H1 (cell line): ENCODE measurements at regions of chr11 and their contacts with region 1.

Region 1: GRCh38 chr11:69088676-69089146 is 40.0 kb downstream of the TPCN2 start:
- DNase-seq: peak; percentile 70 to 89
- H3K4me3 ChIP-seq: no peak overlapping the region
- H3K27ac ChIP-seq: no peak overlapping the region
- H3K4me1 ChIP-seq: peaks cover 0 to 4% (median 0%) of the 10 kb centered on the region in 4 experiments; a peak in 2 of 7 replicates
- H3K27me3 ChIP-seq: no peaks in the 10 kb centered on the region
- CTCF ChIP-seq: peak in 2 of 3 experiments; percentile 87 to 93; a peak in 3 of 4 replicates
- EP300 ChIP-seq: no peak
- POLR2A ChIP-seq: no peak
- RAD21 ChIP-seq: peak; percentile 87 to 94

Region 2: GRCh38 chr11:68950268-68950667 is 138.4 kb before region 1 on chr11:
- CTCF ChIA-PET with region 1: interaction called, 13 read pairs
- POLR2A ChIA-PET with region 1: no interaction called
- DNase-seq: no peak
- H3K4me3 ChIP-seq: no peak overlapping the region
- H3K27ac ChIP-seq: no peak overlapping the region
- H3K4me1 ChIP-seq: peaks cover 0 to 10% (median 2%) of the 10 kb centered on the region in 4 experiments; a peak in 5 of 7 replicates
- H3K27me3 ChIP-seq: no peaks in the 10 kb centered on the region
- CTCF ChIP-seq: peak; percentile 53 to 74 (median 64)
- EP300 ChIP-seq: no peak
- POLR2A ChIP-seq: no peak
- RAD21 ChIP-seq: peak; percentile 56 to 61; a peak in 3 of 4 replicates